Activated CD8-positive, alpha-beta T cell treated with anti-CD3 and anti-CD28 coated beads for 36 hours (primary cell): ENCODE measurements at regions of chr16 and their contacts with region 1.

Region 1: GRCh38 chr16:10737068-10737625 is 6.5 kb upstream of the NUBP1 start:
- DNase-seq: peak; percentile 68
- ATAC-seq: peak; percentile 63
- H3K4me3 Mint-ChIP-seq: peak overlapping the region; percentile 33
- H3K27ac Mint-ChIP-seq: peak overlapping the region; percentile 59
- H3K4me1 Mint-ChIP-seq: peaks cover 32% of the 10 kb centered on the region
- H3K27me3 Mint-ChIP-seq: no peaks in the 10 kb centered on the region
- CTCF ChIP-seq: peak; percentile 93

Region 2: DNA sequence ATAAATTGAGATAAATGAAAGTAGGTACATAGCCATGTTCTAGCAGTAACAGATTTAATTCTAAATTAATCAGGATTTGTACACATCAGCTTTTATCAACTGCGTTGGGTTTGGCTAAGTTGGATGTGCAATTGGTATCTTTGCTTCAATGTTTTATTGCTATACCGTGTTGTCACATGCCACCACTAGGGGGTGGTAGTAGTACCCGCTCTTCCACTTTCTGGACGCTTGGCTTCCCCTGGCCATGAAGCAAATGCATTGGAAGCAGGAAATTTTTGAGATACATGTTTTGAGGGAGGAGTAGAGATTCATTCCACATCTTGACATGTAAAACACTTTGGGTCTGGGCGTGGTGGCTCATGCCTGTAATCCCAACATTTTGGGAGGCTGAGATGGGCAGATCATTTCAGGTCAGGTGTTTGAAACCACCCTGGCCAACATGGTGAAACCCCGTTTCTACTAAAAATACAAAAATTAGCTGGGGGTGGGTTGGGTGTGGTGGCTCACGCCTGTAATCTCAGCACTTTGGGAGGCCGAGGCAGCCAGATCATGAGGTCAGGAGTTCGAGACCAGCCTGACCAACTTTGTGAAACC is 215.4 kb before region 1 on chr16:
- CTCF ChIA-PET with region 1: interaction called, 74 read pairs
- POLR2A ChIA-PET with region 1: no interaction called
- intact Hi-C with region 1: no loop called
- DNase-seq: peak; percentile 61
- ATAC-seq: peak; percentile 65
- H3K4me3 Mint-ChIP-seq: no peak overlapping the region
- H3K27ac Mint-ChIP-seq: no peak overlapping the region
- H3K4me1 Mint-ChIP-seq: peaks cover 2% of the 10 kb centered on the region
- H3K27me3 Mint-ChIP-seq: peaks cover 9% of the 10 kb centered on the region
- CTCF ChIP-seq: peak; percentile 71

Region 3: DNA sequence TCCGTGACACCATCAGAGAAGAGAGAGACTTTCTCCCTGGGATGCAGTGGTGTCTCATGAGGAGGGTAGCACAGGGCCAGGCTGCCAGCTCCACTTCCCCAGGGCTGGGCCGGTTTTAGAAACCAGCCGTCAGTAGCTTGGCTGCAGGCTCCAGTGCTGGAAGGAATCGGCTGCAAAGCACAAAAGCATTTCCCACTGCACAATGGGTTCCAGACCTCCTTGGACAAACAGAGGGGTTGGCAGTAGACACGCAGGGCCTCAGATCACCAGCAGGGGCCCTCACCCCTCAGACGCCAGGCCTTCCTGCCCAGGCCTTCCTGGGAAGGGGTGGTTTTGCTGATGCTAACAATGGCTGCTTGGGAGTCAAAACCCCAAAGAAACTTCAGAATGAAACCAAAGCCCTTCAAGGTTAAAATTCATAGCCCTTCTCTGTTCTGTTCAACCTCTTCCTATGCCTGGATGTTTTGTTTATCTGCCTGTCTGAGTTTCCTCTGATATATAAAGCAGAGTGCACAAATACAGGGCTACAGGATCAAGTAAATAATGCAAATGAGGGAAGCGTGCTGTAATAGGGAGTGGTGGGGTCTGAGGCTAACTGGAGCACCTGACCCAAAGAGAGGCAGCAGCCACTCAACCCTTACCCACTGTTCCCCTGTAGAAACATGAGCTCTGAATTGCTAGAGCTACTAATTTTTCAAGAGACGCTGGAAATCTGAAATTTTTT is 68.7 kb before region 1 on chr16:
- CTCF ChIA-PET with region 1: no interaction called
- POLR2A ChIA-PET with region 1: no interaction called
- intact Hi-C with region 1: loop called (anchors 10 kb)
- DNase-seq: peak; percentile 19
- ATAC-seq: no peak
- H3K4me3 Mint-ChIP-seq: no peak overlapping the region
- H3K27ac Mint-ChIP-seq: no peak overlapping the region
- H3K4me1 Mint-ChIP-seq: no peaks in the 10 kb centered on the region
- H3K27me3 Mint-ChIP-seq: no peaks in the 10 kb centered on the region
- CTCF ChIP-seq: peak; percentile 60

Region 4: DNA sequence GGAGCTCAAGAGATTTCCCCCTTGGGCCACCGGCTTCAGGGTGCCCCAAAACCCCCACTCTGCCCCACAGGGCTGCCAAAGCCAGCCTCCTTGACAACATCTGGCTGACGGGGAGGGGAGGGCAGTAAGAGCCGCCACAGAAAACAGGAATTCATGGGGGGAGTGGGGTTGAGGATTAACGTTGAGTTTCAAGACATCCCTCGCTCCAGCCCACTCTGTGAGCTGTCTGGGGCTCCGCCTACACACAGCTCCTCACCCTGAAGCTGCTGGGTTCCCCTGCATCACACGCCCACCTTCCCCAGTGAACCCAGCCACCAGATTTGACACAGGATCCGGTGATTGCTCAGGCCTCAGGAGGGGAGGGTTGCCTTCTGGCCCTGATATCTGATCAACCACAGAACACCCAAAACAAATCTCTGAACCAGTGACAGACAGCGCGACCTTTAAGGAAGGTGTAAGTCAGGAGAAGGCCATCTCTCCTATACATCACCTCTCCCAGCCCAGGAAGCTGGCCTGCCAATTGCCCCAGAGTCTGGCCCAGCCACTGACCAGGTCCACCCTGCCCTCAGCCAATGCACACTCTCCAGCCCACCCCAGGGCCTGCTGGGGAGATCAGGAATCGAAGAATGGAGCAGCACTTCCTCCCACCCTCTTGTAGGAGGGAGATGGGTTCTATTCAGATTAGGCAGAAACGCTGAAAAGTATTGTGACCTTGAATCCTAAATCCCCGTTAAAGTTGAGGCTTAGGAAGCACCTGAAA is 339.3 kb after region 1 on chr16:
- CTCF ChIA-PET with region 1: no interaction called
- POLR2A ChIA-PET with region 1: no interaction called
- intact Hi-C with region 1: no loop called
- DNase-seq: peak; percentile 93
- ATAC-seq: peak; percentile 88
- H3K4me3 Mint-ChIP-seq: no peak overlapping the region
- H3K27ac Mint-ChIP-seq: peak overlapping the region; percentile 91
- H3K4me1 Mint-ChIP-seq: peaks cover 90% of the 10 kb centered on the region
- H3K27me3 Mint-ChIP-seq: no peaks in the 10 kb centered on the region
- CTCF ChIP-seq: no peak